ENCODE measurements at regions of chr21 and their contacts with region 1.

Region 1: DNA sequence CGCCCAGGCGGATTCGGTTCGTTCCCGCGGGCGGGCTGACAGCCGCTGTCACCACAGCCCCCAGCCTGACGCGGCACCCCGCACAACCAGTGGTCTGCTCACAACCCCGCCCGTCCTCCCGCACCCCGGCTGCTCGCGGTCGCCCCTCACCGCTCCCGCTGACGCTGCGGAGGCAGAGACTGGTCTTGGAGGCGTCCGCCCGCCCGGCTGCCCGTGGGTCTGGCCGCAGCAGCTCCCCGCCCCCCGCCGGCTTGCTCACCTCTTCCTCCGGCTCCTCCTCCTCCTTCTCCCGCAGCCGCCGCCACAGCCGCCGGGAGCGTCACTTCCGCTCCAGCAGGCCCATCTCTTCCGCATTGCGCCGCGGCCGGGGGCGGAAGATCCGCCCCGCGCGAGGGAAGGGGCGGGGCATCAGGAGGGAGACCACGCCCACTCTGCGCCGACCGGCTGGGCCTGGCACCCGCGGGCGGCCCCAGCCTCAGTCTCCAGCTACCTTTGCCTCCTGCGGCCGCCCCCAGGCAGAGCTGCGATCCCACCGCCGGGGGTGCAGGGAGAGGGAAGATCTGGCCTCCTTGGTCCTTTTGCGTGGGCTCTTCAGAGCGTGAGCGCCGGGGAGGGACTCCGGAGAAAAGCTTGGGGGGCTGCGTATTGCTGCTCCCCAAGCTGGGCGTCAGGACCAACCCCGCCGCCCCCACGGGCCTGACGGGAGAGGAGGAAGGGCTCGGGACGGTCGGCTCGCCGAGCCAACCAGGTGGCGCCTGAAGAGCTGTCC is at the start of gene SYNJ1:
- DNase-seq: peak; percentile 85 to 97 (median 91)
- ATAC-seq: peak; percentile 88 to 92 (median 90)
- H3K4me3 ChIP-seq: peak within 1 kb of the TSS; percentile 83 to 91
- H3K4me3 Mint-ChIP-seq: peak within 1 kb of the TSS; percentile 96 to 98 (median 97)
- H3K27ac ChIP-seq: peak within 1 kb of the TSS; percentile 73
- H3K27ac Mint-ChIP-seq: peak within 1 kb of the TSS; percentile 90 to 96
- H3K4me1 ChIP-seq: peaks cover 24 to 27% of the 10 kb centered on the region in 2 experiments
- H3K4me1 Mint-ChIP-seq: peaks cover 64 to 70% (median 66%) of the 10 kb centered on the region in 3 donors
- H3K27me3 ChIP-seq: no peaks in the 10 kb centered on the region
- H3K27me3 Mint-ChIP-seq: no peaks in the 10 kb centered on the region
- total RNA-seq, gene SYNJ1: 15.2 to 24.0 (median 20.3) TPM

Region 2: DNA sequence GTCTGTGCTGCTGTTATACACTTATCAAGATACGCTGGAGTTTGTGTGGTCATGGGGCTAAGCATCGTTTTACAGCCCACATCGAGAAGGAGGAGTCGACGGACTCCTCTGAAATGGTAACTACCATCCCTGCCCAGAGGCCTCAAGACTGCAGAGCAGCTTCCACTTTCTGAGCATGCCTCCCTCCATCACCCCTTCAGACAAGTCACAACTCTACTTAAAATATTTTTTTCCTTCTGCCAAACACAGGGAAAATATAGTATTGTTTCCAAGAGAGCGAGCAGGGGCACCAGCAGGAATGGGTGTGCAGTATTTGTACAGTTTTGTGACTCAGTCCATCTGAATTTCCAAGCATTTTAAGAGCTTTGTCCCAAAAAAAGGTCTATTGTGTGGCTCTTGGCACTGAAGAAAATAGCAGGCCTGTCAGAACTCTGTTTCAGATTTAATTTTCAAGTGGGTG is 301.2 kb before region 1 on chr21:
- CTCF ChIA-PET with region 1: interaction called in 1 of 2 experiments, 11 read pairs
- POLR2A ChIA-PET with region 1: no interaction called
- DNase-seq: no peak
- ATAC-seq: no peak
- H3K4me3 ChIP-seq: no peak overlapping the region
- H3K4me3 Mint-ChIP-seq: no peak overlapping the region
- H3K27ac ChIP-seq: no peak overlapping the region
- H3K27ac Mint-ChIP-seq: peak overlapping the region in 1 of 2 donors; percentile 33
- H3K4me1 ChIP-seq: no peaks in the 10 kb centered on the region
- H3K4me1 Mint-ChIP-seq: peaks cover 0 to 8% (median 5%) of the 10 kb centered on the region in 3 donors
- H3K27me3 ChIP-seq: no peaks in the 10 kb centered on the region
- H3K27me3 Mint-ChIP-seq: no peaks in the 10 kb centered on the region

Region 3: GRCh38 chr21:32525282-32525681 is 202.6 kb before region 1 on chr21:
- CTCF ChIA-PET with region 1: no interaction called
- POLR2A ChIA-PET with region 1: no interaction called
- DNase-seq: no peak
- ATAC-seq: no peak
- H3K4me3 ChIP-seq: no peak overlapping the region
- H3K4me3 Mint-ChIP-seq: no peak overlapping the region
- H3K27ac ChIP-seq: no peak overlapping the region
- H3K27ac Mint-ChIP-seq: no peak overlapping the region
- H3K4me1 ChIP-seq: no peaks in the 10 kb centered on the region
- H3K4me1 Mint-ChIP-seq: no peaks in the 10 kb centered on the region
- H3K27me3 ChIP-seq: no peaks in the 10 kb centered on the region
- H3K27me3 Mint-ChIP-seq: no peaks in the 10 kb centered on the region

Region 4: DNA sequence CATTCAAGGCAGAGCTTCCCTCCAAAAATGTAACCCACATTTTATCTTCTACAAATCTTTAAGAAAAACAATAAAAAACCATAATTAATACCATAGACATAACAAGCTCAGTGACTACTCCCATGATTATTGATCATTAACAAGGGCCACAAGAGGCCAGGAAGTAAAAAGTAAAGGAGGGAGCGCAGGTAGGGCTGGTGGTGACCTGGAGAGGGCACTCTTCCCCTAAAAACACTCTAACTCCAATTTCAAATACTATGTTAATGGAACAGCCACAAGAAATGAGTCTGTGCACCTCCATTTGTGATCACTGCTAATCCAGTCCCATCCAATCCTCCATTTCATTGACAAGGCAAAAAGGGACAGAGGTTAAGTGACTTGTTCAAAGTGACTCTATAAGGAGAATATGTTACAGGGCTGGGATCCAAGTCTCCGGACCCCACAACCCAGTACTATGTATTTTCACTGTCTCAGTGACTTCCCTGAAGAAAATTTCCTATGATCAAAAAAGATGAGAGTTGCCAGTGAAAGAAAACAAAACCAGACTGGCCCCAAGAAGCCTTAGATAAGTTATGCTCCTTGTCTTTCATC is 74.5 kb before region 1 on chr21:
- CTCF ChIA-PET with region 1: no interaction called
- POLR2A ChIA-PET with region 1: no interaction called
- DNase-seq: peak in 17 of 35 experiments; percentile 2 to 57 (median 13)
- ATAC-seq: peak; percentile 49 to 61 (median 56)
- H3K4me3 ChIP-seq: no peak overlapping the region
- H3K4me3 Mint-ChIP-seq: no peak overlapping the region
- H3K27ac ChIP-seq: no peak overlapping the region
- H3K27ac Mint-ChIP-seq: no peak overlapping the region
- H3K4me1 ChIP-seq: no peaks in the 10 kb centered on the region
- H3K4me1 Mint-ChIP-seq: peaks cover 0 to 2% (median 0%) of the 10 kb centered on the region in 3 donors
- H3K27me3 ChIP-seq: no peaks in the 10 kb centered on the region
- H3K27me3 Mint-ChIP-seq: no peaks in the 10 kb centered on the region

Region 5: DNA sequence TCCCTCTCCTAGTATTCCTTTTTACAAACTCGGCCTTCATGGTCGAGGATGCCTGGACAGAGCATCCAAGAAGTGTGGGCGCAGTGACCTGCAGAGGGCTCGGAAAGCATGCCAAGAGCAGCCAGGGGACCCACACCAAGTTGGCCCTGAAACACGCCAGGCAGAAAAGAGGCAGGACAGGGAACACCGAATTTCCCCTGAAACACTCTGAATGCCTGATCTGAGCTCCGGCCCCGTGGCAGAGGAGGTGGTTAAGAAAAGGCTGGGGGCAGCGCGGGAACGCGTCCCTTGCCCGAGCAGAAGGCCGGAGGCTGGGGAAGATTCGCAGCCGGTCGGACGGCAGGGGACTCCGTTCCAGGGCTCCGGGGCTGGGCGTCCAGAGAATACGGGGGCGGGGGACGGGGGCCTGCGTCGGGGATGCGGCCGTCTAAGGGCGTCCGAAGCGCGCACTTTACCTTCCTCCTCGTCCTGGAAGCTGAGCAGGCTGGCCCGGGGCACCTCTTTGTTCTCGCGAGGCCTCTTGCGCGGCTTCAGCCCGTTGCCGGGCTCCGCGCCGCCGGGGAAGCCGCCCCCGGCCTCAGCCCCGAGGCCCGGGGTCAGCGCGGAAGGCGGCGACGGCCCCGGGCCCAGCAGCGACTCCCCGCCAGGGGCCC is 43.1 kb after region 1 on chr21:
- CTCF ChIA-PET with region 1: interaction called in 1 of 2 experiments, 6 read pairs
- POLR2A ChIA-PET with region 1: interaction called, 3 to 12 read pairs
- DNase-seq: peak in 28 of 35 experiments; percentile 3 to 64 (median 45)
- ATAC-seq: peak; percentile 39 to 48 (median 44)
- H3K4me3 ChIP-seq: peak overlapping the region; percentile 59 to 89
- H3K4me3 Mint-ChIP-seq: peak overlapping the region; percentile 84 to 98 (median 95)
- H3K27ac ChIP-seq: no peak overlapping the region
- H3K27ac Mint-ChIP-seq: peak overlapping the region; percentile 77 to 87
- H3K4me1 ChIP-seq: peaks cover 17 to 19% of the 10 kb centered on the region in 2 experiments
- H3K4me1 Mint-ChIP-seq: peaks cover 66 to 76% (median 68%) of the 10 kb centered on the region in 3 donors
- H3K27me3 ChIP-seq: no peaks in the 10 kb centered on the region
- H3K27me3 Mint-ChIP-seq: peaks cover 2 to 3% of the 10 kb centered on the region in 2 donors

Region 6: GRCh38 chr21:32813265-32813903 is 85.5 kb after region 1 on chr21:
- CTCF ChIA-PET with region 1: no interaction called
- POLR2A ChIA-PET with region 1: no interaction called
- DNase-seq: no peak
- ATAC-seq: no peak
- H3K4me3 ChIP-seq: no peak overlapping the region
- H3K4me3 Mint-ChIP-seq: no peak overlapping the region
- H3K27ac ChIP-seq: no peak overlapping the region
- H3K27ac Mint-ChIP-seq: no peak overlapping the region
- H3K4me1 ChIP-seq: no peaks in the 10 kb centered on the region
- H3K4me1 Mint-ChIP-seq: no peaks in the 10 kb centered on the region
- H3K27me3 ChIP-seq: no peaks in the 10 kb centered on the region
- H3K27me3 Mint-ChIP-seq: no peaks in the 10 kb centered on the region

Measured in T-cell (primary cell).